ENCODE measurements at regions of chr11 and their contacts with region 1.

Region 1: DNA sequence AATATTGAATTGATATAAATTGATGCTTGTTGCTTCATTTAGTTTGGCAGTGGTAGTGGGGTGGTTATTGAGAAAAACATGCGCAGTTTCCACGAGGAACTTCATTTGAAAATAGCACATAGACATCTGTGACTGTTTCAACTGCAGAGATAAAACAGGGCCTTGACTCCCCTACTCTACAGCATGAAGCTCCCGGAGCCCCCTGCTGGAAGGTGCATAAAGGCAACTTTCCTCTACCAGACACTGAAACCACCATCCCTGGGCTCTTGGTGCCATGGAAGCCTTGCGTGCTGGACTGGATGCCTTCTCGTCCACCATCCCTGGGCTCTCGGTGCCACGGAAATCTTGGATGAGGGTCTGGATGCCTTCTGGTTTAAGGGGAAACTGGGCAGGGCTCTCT is 195.9 kb downstream of the CSNK2A3 start:
- DNase-seq: peak; percentile 73
- H3K4me3 Mint-ChIP-seq: no peak overlapping the region
- H3K27ac Mint-ChIP-seq: peak overlapping the region; percentile 84
- H3K4me1 Mint-ChIP-seq: peaks cover 24% of the 10 kb centered on the region
- H3K27me3 Mint-ChIP-seq: peaks cover 41% of the 10 kb centered on the region

Region 2: GRCh38 chr11:11010624-11011127 is 146.5 kb before region 1 on chr11:
- CTCF ChIA-PET with region 1: no interaction called
- DNase-seq: peak; percentile 34
- H3K4me3 Mint-ChIP-seq: no peak overlapping the region
- H3K27ac Mint-ChIP-seq: no peak overlapping the region
- H3K4me1 Mint-ChIP-seq: no peaks in the 10 kb centered on the region
- H3K27me3 Mint-ChIP-seq: peaks cover 28% of the 10 kb centered on the region

Region 3: DNA sequence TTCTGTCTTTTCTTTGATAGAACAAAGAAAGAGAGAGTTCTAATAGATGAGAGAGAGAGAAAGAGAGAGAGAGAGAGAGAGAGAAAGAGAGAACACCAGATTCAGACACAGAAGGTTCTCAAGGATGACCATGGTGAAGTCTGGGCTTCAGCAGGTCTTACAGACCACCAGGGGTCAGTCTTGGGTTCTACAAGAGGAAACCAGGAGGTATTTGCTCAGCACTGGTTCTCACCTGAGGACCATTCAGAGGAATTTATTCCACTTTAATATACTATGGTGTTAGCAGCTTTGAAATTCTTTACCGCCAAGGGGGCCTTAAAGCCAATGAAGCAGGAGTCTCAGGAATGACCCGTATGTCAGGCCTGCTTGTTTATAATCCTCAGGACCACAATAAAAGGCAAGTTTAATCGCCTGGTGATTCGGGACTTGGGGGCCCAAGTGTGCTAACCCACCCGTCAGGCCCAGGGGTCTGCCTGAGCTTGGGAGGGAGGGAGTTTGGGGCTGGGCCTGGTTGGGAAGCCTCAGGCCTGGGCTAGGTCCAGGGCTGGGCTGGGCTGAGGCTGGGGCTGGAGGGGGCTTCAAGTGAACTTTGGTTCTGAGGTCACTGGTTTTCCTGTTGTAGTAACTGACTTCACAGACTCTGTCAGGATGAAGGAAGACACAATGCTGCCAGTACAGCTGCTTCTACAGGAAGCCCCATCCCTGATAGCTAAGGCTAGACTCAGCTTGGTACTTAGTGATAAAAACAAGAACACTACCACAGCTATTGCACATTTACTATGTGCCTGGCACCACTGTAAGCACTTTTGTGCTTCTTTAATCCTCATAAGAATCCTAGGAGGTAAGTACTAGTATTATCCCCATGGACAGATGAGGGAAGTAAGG is 120.1 kb before region 1 on chr11:
- CTCF ChIA-PET with region 1: interaction called, 47 read pairs
- DNase-seq: peak; percentile 43
- H3K4me3 Mint-ChIP-seq: no peak overlapping the region
- H3K27ac Mint-ChIP-seq: peak overlapping the region; percentile 63
- H3K4me1 Mint-ChIP-seq: peaks cover 5% of the 10 kb centered on the region
- H3K27me3 Mint-ChIP-seq: peaks cover 8% of the 10 kb centered on the region

Region 4: DNA sequence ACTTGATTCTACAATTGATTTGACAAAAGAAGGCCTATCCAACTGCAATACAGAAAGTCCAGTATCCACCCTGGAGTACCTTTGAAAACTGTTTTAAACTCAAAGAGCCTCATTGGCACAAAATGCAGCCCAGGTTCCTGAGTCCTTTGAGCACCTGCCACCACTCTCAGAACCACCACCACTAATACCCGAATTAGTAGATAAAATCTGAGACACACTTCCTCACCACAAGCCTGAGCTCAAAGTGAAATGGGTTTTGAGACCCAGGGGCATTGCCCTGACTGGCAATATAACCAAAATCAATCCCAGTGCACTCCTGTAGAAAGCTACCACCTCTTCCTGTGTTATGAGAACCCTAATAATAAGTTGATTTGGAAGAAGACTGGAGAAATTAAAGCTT is 19.8 kb before region 1 on chr11:
- CTCF ChIA-PET with region 1: interaction called, 17 read pairs
- DNase-seq: no peak
- H3K4me3 Mint-ChIP-seq: no peak overlapping the region
- H3K27ac Mint-ChIP-seq: no peak overlapping the region
- H3K4me1 Mint-ChIP-seq: peaks cover 12% of the 10 kb centered on the region
- H3K27me3 Mint-ChIP-seq: no peaks in the 10 kb centered on the region

Region 5: GRCh38 chr11:11167806-11168205 is 10.6 kb after region 1 on chr11:
- CTCF ChIA-PET with region 1: no interaction called
- DNase-seq: no peak
- H3K4me3 Mint-ChIP-seq: no peak overlapping the region
- H3K27ac Mint-ChIP-seq: no peak overlapping the region
- H3K4me1 Mint-ChIP-seq: peaks cover 10% of the 10 kb centered on the region
- H3K27me3 Mint-ChIP-seq: peaks cover 22% of the 10 kb centered on the region

Region 6: GRCh38 chr11:11202885-11203284 is 45.7 kb after region 1 on chr11:
- CTCF ChIA-PET with region 1: no interaction called
- DNase-seq: no peak
- H3K4me3 Mint-ChIP-seq: no peak overlapping the region
- H3K27ac Mint-ChIP-seq: no peak overlapping the region
- H3K4me1 Mint-ChIP-seq: no peaks in the 10 kb centered on the region
- H3K27me3 Mint-ChIP-seq: peaks cover 16% of the 10 kb centered on the region

Measured in activated naive CD4-positive, alpha-beta T cell treated with anti-CD3 and anti-CD28 coated beads, Interleukin-2, amount 10 ng/mL, durations not matched to agents 7 days and 5 days (primary cell).